SK-N-SH (cell line): ENCODE measurements at regions of chr4 and their contacts with region 1.

Region 1: DNA sequence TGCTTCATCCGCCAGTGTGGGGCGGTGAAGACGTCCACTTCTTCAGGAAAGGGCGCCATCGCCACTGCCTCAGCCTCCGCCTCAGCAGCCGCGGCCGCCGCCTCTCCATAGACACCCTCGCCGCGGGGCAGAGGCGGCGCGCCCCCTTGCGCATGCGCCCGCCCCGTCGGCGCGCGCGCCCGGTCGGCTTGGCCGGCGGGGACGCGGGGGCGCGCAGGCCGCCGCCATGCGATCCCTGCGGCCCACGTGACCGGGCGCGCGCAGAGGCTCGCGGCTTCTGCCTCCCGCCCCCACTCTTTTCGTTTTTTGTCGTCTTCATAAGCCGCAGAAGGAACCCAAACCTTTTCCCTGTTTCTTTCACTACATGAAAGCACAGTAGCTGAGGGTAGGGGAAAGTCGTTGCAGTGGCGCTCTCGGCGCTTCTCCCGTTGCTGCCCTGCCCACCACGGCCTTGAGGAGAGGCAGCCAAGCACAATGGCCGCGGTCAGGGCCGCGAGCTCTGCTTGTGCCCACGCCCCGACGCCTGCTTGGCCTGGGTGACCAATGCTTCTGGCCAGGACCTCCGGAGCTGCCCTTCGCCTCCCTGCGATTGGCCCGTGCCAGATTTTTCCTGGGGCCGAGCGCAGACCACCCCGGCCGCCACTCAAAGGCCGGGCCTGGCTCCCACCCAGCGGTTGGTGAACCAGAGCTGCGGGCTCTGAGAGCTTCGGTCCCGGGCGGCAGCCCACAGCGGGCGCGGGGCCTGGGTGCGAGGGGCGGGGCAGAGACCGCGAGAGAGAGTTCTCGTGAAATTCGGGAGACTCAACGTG is at the start of gene FBXL5:
- DNase-seq: peak; percentile 99
- H3K4me3 ChIP-seq: peak within 1 kb of the TSS; percentile 71 to 91
- H3K27ac ChIP-seq: peak within 1 kb of the TSS; percentile 91 to 96
- H3K4me1 ChIP-seq: peaks cover 13 to 15% of the 10 kb centered on the region in 2 experiments; a peak in 3 of 4 replicates
- H3K27me3 ChIP-seq: no peaks in the 10 kb centered on the region
- CTCF ChIP-seq: no peak
- EP300 ChIP-seq: no peak
- RAD21 ChIP-seq: no peak
- polyA plus RNA-seq, gene FBXL5: 13.5 and 17.2 TPM in 2 replicates

Region 2: DNA sequence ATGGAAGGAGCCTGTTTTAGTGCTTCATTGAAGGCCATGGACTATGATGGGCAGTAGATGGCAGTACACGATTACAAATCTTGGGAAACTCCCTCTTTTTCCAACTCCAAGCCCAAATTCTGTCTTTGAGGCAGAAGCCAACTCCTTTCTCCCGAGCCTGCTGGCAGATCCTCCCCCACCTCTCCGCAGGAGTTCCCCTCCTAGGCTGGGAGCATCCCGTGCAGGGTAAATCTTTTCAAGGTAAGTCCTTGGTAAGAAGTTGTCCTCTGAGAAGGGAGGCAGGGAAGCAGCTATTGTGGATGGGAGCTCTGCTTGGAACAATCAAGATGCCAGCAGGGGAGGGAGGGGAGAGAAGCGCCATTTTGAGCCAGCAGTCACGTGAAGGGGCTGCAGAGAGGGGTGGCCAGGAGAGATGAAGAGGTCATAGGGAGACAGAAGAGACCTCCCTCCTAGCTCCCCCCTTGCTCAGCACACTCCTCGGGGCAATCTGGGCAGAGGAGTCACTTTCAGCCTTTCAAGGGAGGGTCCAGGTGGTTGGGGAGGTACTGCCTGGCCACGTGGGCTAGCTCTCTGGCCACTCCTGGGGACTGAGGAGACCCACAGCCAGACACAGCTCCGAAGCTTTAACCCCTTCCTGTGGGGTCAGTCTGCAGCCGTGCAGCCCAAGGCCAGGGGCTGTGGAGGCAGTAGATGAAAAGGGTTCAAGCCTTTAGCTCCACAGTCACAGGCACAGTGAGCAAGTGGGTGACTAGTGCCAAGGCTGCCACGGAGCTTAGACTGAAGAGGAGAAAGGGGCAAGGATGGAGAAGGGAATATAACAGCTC is 176.1 kb before region 1 on chr4:
- CTCF ChIA-PET with region 1: interaction called, 17 read pairs
- POLR2A ChIA-PET with region 1: interaction called, 20 read pairs
- DNase-seq: peak; percentile 74
- H3K4me3 ChIP-seq: peak overlapping the region; percentile 49 to 55
- H3K27ac ChIP-seq: peak overlapping the region; percentile 58 to 93
- H3K4me1 ChIP-seq: peaks cover 10% of the 10 kb centered on the region in 2 experiments; a peak in 3 of 4 replicates
- H3K27me3 ChIP-seq: no peaks in the 10 kb centered on the region
- CTCF ChIP-seq: peak; percentile 79
- EP300 ChIP-seq: no peak
- RAD21 ChIP-seq: peak; percentile 94

Region 3: DNA sequence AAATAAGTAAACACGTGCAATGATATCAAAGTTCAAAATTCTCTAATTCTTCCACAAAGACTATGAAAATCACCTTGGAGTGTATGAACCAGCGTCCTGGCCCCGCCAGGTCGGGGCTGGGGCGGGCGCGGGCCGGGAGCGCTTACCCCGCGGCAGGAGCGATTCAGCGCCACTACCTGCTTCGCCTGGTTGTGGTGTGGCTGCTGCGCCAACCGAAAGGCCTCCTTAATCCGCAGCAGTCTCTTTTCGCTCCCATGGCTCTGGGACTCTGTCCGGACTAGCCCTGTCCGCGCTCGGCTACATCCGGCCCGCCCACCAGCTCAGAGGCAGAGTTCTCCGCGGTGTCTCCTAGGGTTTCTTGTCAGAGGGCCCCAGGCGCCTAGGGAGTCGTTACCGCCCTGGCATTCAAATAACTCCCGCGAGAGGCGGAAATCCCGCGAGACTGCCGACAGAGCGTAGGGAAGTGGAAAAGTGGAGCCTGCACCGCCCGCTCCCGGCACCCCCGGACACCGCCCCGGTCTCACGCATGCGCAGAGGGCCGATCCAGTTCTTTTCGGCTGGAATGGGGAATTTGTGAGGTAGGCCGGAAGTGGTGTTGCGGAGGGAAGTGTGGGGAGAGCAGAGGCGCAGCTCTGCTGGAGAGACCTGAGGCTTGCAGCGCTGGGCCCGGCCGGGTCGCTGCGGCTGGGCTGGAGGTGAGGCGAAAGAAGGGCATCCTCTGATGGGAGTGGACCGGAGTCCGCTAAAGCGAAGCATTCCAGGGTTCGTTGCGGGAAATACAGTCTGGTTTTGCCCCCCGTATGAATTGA is 26.0 kb after region 1 on chr4 and contains the start of gene FAM200B:
- CTCF ChIA-PET with region 1: interaction called, 3 read pairs
- POLR2A ChIA-PET with region 1: interaction called, 15 read pairs
- DNase-seq: peak; percentile 99
- H3K4me3 ChIP-seq: peak within 1 kb of the TSS; percentile 85 to 96
- H3K27ac ChIP-seq: peak within 1 kb of the TSS; percentile 96 to 98
- H3K4me1 ChIP-seq: peaks cover 14 to 31% of the 10 kb centered on the region in 2 experiments; a peak in 3 of 4 replicates
- H3K27me3 ChIP-seq: no peaks in the 10 kb centered on the region
- CTCF ChIP-seq: 0 out of 2 replicates have a peak, but pooled peaks have one; percentile 12
- EP300 ChIP-seq: peak in 1 of 2 experiments; percentile 33; a peak in 1 of 4 replicates
- RAD21 ChIP-seq: no peak
- polyA plus RNA-seq, gene FAM200B: 36.2 and 46.3 TPM in 2 replicates

Region 4: DNA sequence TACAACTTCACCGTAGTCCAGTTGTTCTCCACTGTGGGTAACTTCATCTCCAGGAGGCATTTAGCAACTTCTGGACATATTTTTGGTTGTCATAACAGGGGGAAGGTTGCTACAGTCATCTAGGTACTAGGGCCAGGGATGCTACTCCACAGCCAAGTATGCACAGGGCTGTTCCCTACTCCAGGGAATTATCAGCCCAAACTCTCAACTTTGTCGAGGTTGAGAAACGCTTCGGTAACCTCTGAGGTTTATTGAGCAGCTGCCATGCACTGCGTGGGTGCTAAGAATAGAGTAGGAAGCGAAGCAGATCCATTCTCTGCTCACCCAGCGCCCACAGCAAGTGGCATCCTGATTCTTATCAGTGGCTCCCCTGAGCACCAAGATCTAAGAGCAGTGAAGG is 274.9 kb after region 1 on chr4:
- CTCF ChIA-PET with region 1: no interaction called
- POLR2A ChIA-PET with region 1: no interaction called
- DNase-seq: no peak
- H3K4me3 ChIP-seq: no peak overlapping the region
- H3K27ac ChIP-seq: no peak overlapping the region
- H3K4me1 ChIP-seq: no peaks in the 10 kb centered on the region
- H3K27me3 ChIP-seq: no peaks in the 10 kb centered on the region; the same call in 1 of the 2 replicates
- CTCF ChIP-seq: no peak
- EP300 ChIP-seq: no peak
- RAD21 ChIP-seq: no peak